Tibial artery (tissue), 4 donors: ENCODE measurements at regions of chr1 and their contacts with region 1.

Region 1: GRCh38 chr1:180502360-180503273 is at the start of gene ACBD6:
- DNase-seq: peak; percentile 82 to 88
- H3K4me3 ChIP-seq: peak within 1 kb of the TSS; percentile 64 to 66
- H3K27ac ChIP-seq: peak within 1 kb of the TSS; percentile 83 to 85
- H3K4me1 ChIP-seq: peaks cover 0 to 41% (median 13%) of the 10 kb centered on the region in 4 donors
- H3K27me3 ChIP-seq: no peaks in the 10 kb centered on the region
- CTCF ChIP-seq: peak in 1 of 2 experiments; percentile 16

Region 2: GRCh38 chr1:180188091-180188506 is 314.5 kb before region 1 on chr1:
- intact Hi-C with region 1: no loop called
- DNase-seq: no peak
- H3K4me3 ChIP-seq: no peak overlapping the region
- H3K27ac ChIP-seq: no peak overlapping the region
- H3K4me1 ChIP-seq: no peaks in the 10 kb centered on the region
- H3K27me3 ChIP-seq: no peaks in the 10 kb centered on the region
- CTCF ChIP-seq: peak; percentile 41 to 44

Region 3: GRCh38 chr1:180762796-180763195 is 260.2 kb after region 1 on chr1:
- intact Hi-C with region 1: no loop called
- DNase-seq: no peak
- H3K4me3 ChIP-seq: no peak overlapping the region
- H3K27ac ChIP-seq: no peak overlapping the region
- H3K4me1 ChIP-seq: peaks cover 0 to 10% (median 0%) of the 10 kb centered on the region in 4 donors
- H3K27me3 ChIP-seq: no peaks in the 10 kb centered on the region
- CTCF ChIP-seq: no peak

Region 4: DNA sequence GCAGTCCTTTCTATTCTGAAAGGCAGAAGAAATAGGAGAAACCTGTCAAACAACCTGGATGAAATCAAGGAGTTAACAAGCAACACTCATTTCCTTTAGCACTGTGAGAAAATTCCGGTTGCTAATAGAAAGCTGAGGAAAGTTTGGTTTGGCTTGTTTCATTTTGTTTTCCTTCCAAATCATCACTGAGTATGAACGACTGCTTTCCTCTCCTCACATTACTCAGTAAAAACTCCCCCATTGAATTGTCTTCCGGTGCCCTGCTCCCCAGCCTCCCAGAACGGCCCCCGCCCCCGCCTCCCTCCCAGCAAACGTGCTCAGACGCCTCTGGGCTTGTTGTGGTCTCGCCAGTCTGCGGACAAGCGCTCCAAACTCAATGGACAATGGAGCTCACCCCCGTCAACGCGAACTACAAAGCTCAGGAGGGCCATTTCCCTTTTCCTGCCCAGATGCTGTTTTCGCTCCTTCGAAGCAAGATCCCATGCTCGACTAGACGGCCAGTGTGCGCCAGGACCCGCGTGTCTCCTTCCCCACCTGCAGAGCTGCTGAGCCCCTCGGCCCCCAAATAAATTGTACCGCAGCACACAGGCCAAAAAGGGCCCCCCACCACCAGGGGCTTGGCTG is 519.3 kb after region 1 on chr1:
- intact Hi-C with region 1: loop called (anchors 5 kb)
- DNase-seq: peak; percentile 69 to 84
- H3K4me3 ChIP-seq: peak overlapping the region; percentile 81 to 83
- H3K27ac ChIP-seq: peak overlapping the region; percentile 82 to 83
- H3K4me1 ChIP-seq: peaks cover 0 to 41% (median 21%) of the 10 kb centered on the region in 4 donors
- H3K27me3 ChIP-seq: no peaks in the 10 kb centered on the region
- CTCF ChIP-seq: no peak

Region 5: DNA sequence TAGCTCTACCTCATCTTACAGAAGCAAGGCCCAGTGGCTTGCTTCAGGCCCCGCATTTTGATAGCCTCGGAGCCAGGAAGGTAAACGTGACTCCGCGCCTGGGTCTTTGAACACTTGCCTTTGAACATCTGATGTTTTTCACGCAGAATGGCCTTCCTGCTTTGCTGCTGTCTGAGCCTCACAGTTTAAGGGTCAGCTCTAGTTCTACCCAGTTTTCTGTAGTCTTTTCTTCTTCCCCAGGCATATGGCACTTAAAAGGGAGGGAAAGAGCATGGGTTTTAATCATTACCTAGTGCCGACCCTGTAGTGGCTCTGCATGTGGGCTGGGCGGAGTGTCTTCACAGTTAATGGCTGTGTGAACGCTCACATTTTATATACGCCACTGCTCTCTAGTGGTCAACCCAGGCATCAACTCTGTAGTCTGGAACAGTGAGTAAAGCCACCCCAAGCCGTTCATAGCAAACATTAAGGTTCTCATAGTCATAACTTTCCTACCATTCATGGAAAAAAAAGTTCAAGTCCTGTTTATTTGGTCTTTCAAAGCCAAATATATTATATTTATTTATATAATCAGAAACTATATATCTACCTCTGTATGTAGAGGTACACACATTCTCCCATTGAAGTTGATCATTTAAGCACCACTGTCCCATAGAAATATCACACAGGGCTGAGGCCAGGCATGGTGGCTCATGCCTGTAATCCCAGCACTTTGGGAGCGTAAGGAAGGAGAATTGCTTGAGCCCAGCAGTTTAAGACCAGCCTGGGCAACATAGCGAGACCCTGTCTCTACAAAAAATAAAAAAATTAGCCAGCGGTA is 664.0 kb after region 1 on chr1:
- intact Hi-C with region 1: loop called (anchors 10 kb)
- DNase-seq: peak; percentile 58 to 75
- H3K4me3 ChIP-seq: no peak overlapping the region
- H3K27ac ChIP-seq: no peak overlapping the region
- H3K4me1 ChIP-seq: peaks cover 0 to 5% (median 2%) of the 10 kb centered on the region in 4 donors
- H3K27me3 ChIP-seq: no peaks in the 10 kb centered on the region
- CTCF ChIP-seq: peak; percentile 84 to 86